A673 (cell line): ENCODE measurements at regions of chr7 and their contacts with region 1.

Region 1: GRCh38 chr7:136874238-136875032 is 6.0 kb downstream of the CHRM2 start:
- DNase-seq: peak; percentile 72
- H3K4me3 ChIP-seq: no peak overlapping the region
- H3K27ac ChIP-seq: no peak overlapping the region
- H3K4me1 ChIP-seq: peaks cover 11% of the 10 kb centered on the region
- H3K27me3 ChIP-seq: peaks cover 21% of the 10 kb centered on the region
- CTCF ChIP-seq: peak; percentile 77

Region 2: DNA sequence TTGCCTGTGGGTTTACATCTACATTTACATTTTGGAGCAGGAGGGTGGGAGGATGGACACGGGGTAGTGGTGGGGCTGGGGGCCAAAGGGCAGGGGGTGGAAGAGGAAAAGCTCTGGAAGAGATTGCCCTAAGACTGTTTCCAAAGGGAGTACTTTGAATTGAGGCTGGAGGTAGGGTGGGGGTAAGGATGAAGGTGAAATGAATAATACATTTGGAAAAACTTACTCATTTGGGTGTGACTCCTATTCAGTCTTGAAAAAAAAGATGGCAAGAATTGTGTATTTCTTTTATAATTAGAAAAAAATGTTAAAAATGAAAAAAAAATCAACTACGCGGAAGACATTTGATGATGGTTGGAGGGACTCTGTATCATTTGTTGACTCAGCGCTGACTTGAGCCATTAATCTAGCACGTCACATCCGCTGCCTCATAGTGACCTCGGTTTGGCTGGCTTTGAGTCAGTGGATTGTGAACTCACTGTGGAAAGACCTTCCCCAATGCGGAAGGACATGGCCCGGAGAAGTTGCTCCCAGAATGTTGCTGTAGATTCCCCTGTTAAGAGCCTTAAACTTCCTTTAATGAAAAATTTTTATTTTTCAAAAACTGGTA is 1128.6 kb before region 1 on chr7:
- CTCF ChIA-PET with region 1: no interaction called
- POLR2A ChIA-PET with region 1: no interaction called
- intact Hi-C with region 1: no loop called
- DNase-seq: no peak
- H3K4me3 ChIP-seq: no peak overlapping the region
- H3K27ac ChIP-seq: no peak overlapping the region
- H3K4me1 ChIP-seq: no peaks in the 10 kb centered on the region
- H3K27me3 ChIP-seq: peaks cover 59% of the 10 kb centered on the region
- CTCF ChIP-seq: no peak

Region 3: DNA sequence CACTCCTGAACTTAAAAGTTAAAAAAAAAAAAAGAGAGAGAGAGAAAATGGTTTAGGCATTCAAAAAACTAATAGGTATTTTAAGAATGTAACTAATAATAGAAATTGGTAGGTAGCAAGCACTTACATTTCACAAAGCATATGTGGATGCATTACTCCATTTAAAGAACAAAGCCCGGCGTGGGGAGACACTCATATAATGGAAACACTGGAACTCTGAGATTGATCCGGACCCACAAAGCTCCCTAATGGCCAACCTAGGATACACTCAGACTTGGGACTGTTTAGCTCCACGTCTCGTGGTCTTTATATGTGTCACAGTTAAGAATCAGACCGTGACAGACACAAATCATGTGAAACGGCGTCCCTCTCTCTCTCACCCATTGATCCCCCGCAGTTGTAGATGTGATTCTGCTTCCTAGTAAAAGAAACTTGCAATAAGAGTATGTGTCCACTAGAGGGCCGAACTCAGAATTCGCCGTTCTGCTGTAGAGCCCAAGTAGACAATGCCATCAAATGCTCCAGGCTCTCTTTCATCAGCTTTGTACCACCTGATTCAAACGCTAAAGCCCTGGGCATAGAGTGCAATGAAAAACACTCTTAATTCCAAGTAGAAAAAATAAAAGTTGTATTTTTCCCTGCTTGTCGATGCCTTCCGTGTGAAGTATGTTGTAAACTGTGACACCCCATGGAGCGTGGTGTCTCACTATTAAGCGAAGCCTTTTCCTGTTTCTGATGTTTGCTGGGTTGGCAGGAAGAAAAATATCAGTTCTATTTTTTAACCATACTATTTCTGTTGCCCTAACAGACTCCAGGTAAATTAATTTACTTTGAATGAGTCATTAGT is 468.3 kb before region 1 on chr7:
- CTCF ChIA-PET with region 1: no interaction called
- POLR2A ChIA-PET with region 1: no interaction called
- intact Hi-C with region 1: loop called (anchors 5 kb)
- DNase-seq: peak; percentile 90
- H3K4me3 ChIP-seq: peak overlapping the region; percentile 44
- H3K27ac ChIP-seq: peak overlapping the region; percentile 71
- H3K4me1 ChIP-seq: peaks cover 33% of the 10 kb centered on the region
- H3K27me3 ChIP-seq: no peaks in the 10 kb centered on the region
- CTCF ChIP-seq: peak; percentile 87

Region 4: DNA sequence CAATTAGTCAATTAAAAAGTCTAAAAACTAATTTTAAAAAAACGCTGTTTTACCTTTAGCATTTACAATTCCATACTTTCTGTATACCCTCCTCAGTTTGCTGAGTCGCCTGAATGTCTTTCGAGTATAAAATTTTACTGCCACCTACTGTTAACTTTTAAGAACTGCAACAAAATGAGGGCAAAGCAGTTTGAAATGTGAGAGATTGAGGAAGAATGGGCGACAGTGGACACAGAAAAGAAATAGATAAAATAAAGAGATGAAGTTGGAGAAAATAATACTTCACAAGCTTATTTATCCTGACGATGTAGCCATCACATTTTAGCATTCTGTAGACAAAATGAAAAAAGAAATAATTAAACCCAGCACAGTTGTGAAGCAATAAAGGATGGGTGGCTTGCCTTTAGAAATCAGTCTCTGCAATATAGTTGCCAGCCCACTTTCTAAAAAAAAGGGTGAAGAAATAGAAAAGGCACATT is 579.9 kb after region 1 on chr7:
- CTCF ChIA-PET with region 1: no interaction called
- POLR2A ChIA-PET with region 1: no interaction called
- intact Hi-C with region 1: loop called (anchors 10 kb)
- DNase-seq: peak; percentile 59
- H3K4me3 ChIP-seq: no peak overlapping the region
- H3K27ac ChIP-seq: no peak overlapping the region
- H3K4me1 ChIP-seq: no peaks in the 10 kb centered on the region
- H3K27me3 ChIP-seq: peaks cover under 1% of the 10 kb centered on the region
- CTCF ChIP-seq: peak; percentile 79

Region 5: DNA sequence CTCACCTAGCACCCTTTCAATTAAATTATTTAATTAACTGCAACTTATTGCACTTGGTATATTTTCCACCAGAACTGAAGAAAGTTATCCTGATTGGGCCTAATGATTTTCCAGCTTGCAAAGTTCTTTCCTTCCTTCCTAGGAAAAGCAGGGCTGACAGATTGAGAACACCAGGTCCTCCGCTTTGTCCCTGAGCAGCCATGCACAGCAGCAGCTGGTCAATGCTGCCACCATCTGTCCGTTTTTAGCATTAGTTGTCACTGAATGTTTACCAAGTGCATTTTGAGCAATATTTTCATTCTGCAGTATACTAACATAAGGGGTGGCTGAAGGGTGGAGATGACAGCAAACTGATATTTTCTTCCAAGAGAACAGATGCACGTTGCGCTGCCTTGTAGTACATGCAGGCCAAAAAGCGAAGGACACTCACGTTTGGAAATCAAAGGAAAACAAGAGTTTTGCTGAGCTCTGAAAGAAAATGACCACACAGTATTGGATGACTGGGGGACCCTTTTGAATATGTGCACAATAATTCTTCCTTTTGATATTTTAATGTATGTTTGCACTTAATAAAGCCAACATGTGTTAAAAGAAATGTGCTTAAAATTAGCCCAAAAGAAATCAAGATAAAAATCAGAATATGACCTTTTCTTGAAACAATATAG is 717.9 kb after region 1 on chr7:
- CTCF ChIA-PET with region 1: no interaction called
- POLR2A ChIA-PET with region 1: no interaction called
- intact Hi-C with region 1: loop called (anchors 10 kb)
- DNase-seq: peak; percentile 82
- H3K4me3 ChIP-seq: no peak overlapping the region
- H3K27ac ChIP-seq: peak overlapping the region; percentile 58
- H3K4me1 ChIP-seq: peaks cover 10% of the 10 kb centered on the region
- H3K27me3 ChIP-seq: no peaks in the 10 kb centered on the region
- CTCF ChIP-seq: peak; percentile 88